ENCODE measurements at regions of chr22 and their contacts with region 1.

Region 1: GRCh38 chr22:18077639-18078328 is at the start of gene PEX26:
- DNase-seq: peak; percentile 86
- H3K4me3 ChIP-seq: peak within 1 kb of the TSS; percentile 100
- H3K27ac ChIP-seq: peak within 1 kb of the TSS; percentile 57
- H3K27me3 ChIP-seq: no peaks in the 10 kb centered on the region
- CTCF ChIP-seq: no peak
- polyA plus RNA-seq, gene PEX26: 20.8 and 24.8 TPM in 2 replicates

Region 2: DNA sequence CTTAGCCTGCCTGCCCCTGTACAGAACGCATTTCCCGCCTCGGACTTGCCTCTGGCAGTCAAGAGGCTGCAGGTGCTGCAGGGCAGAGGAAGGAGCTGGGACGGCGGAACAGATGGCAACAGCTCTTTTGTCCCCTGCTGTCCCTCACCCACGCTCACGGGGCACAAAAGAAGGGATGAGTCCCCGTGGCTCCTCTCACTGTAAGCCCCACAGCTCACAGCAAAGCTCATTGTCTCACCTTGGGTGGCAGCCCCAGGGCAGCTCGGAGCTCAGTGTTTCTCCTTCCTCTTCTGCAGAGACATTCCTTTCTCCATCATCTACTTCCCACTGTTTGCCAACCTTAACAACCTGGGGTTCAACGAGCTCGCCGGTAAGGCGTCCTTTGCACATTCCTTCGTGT is 490.2 kb before region 1 on chr22:
- CTCF ChIA-PET with region 1: no interaction called
- POLR2A ChIA-PET with region 1: no interaction called
- DNase-seq: no peak
- H3K4me3 ChIP-seq: no peak overlapping the region
- H3K27ac ChIP-seq: no peak overlapping the region
- H3K27me3 ChIP-seq: no peaks in the 10 kb centered on the region
- CTCF ChIP-seq: no peak

Region 3: GRCh38 chr22:17742527-17742902 is 335.3 kb before region 1 on chr22:
- CTCF ChIA-PET with region 1: interaction called, 31 read pairs
- POLR2A ChIA-PET with region 1: no interaction called
- DNase-seq: peak; percentile 23
- H3K4me3 ChIP-seq: no peak overlapping the region
- H3K27ac ChIP-seq: no peak overlapping the region
- H3K27me3 ChIP-seq: no peaks in the 10 kb centered on the region
- CTCF ChIP-seq: peak; percentile 85

Region 4: GRCh38 chr22:17867160-17867785 is 210.5 kb before region 1 on chr22:
- CTCF ChIA-PET with region 1: interaction called, 16 read pairs
- POLR2A ChIA-PET with region 1: no interaction called
- DNase-seq: no peak
- H3K4me3 ChIP-seq: no peak overlapping the region
- H3K27ac ChIP-seq: no peak overlapping the region
- H3K27me3 ChIP-seq: no peaks in the 10 kb centered on the region
- CTCF ChIP-seq: no peak

Region 5: GRCh38 chr22:17910561-17911311 is 167.0 kb before region 1 on chr22:
- CTCF ChIA-PET with region 1: interaction called, 43 read pairs
- POLR2A ChIA-PET with region 1: no interaction called
- DNase-seq: peak; percentile 68
- H3K4me3 ChIP-seq: no peak overlapping the region
- H3K27ac ChIP-seq: peak overlapping the region; percentile 87
- H3K27me3 ChIP-seq: no peaks in the 10 kb centered on the region
- CTCF ChIP-seq: peak; percentile 45

Region 6: DNA sequence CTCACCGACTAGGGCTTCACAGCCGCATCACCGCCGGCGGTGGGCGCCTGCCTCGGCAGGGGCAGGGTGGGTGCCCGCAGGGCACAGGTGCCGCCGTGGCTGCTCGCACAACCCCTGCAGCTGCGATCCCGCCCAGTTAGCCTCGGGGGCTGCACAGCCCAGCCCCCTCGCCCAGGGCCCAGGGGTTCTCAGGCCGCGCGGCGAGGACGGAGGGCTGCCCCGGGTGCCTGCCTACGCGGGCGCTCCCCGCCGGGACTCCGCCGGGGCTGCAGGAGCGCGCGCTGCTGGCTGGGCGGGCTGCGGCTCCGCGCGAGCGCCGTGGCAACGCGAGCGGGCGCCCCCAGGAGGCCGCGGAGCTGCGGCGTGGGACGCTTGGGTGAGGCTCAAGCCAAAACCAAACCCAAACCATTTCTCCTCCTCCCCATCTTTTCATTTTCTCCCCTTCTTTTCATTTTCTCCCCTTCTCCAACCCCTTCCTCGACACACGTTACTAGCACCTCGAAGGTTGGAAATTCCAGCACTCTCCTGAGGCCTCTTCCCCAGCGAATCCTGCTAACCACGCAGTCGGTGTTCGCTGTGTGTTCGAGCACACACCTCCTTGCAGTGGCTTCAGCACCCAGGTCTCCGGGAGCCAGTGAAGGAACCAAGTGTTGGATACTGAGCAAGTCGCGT is 53.4 kb before region 1 on chr22 and contains the start of gene MICAL3:
- CTCF ChIA-PET with region 1: interaction called, 25 read pairs
- POLR2A ChIA-PET with region 1: interaction called, 6 read pairs
- DNase-seq: no peak
- H3K4me3 ChIP-seq: peak within 1 kb of the TSS; percentile 68
- H3K27ac ChIP-seq: peak within 1 kb of the TSS; percentile 31
- H3K27me3 ChIP-seq: no peaks in the 10 kb centered on the region
- CTCF ChIP-seq: peak; percentile 58
- polyA plus RNA-seq, gene MICAL3: 17.8 and 18.5 TPM in 2 replicates

Region 7: DNA sequence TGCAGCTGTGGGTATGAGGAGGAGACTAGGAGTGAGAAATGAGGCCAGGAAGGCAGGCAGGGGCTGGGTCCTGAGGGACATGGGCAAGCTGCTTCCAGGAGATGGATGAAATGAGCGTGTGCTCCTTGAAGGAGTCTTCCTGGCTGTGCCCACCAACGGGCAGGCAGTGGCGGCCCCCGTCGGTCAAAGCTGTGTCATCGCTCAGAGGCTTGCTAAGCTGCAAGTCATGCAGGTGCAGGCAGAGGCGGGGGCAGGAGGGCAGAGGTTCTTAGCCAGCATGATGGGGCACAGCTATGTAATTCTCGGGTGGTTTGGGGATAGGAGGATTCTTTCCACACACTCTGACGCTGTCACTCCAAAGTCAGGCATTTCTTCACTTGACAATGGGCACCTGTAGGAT is 12.5 kb before region 1 on chr22:
- CTCF ChIA-PET with region 1: interaction called, 15 read pairs
- POLR2A ChIA-PET with region 1: no interaction called
- DNase-seq: no peak
- H3K4me3 ChIP-seq: no peak overlapping the region
- H3K27ac ChIP-seq: no peak overlapping the region
- H3K27me3 ChIP-seq: no peaks in the 10 kb centered on the region
- CTCF ChIP-seq: no peak

Region 8: GRCh38 chr22:18113680-18114394 is 36.1 kb after region 1 on chr22:
- CTCF ChIA-PET with region 1: no interaction called
- POLR2A ChIA-PET with region 1: no interaction called
- DNase-seq: no peak
- H3K4me3 ChIP-seq: no peak overlapping the region
- H3K27ac ChIP-seq: no peak overlapping the region
- H3K27me3 ChIP-seq: peaks cover 8% of the 10 kb centered on the region
- CTCF ChIP-seq: no peak

Measured in AG04450 (cell line).